ENCODE measurements at regions of chr14 and their contacts with region 1.

Region 1: GRCh38 chr14:103808403-103809001 is 38.9 kb downstream of the PPP1R13B start:
- DNase-seq: peak; percentile 88
- H3K4me3 Mint-ChIP-seq: no peak overlapping the region
- H3K27ac Mint-ChIP-seq: no peak overlapping the region
- H3K4me1 Mint-ChIP-seq: peaks cover 14% of the 10 kb centered on the region
- H3K27me3 Mint-ChIP-seq: no peaks in the 10 kb centered on the region
- CTCF ChIP-seq: peak; percentile 83

Region 2: GRCh38 chr14:103657471-103657870 is 151.0 kb before region 1 on chr14:
- CTCF ChIA-PET with region 1: no interaction called
- POLR2A ChIA-PET with region 1: no interaction called
- intact Hi-C with region 1: no loop called
- DNase-seq: no peak
- H3K4me3 Mint-ChIP-seq: no peak overlapping the region
- H3K27ac Mint-ChIP-seq: no peak overlapping the region
- H3K4me1 Mint-ChIP-seq: no peaks in the 10 kb centered on the region
- H3K27me3 Mint-ChIP-seq: no peaks in the 10 kb centered on the region
- CTCF ChIP-seq: no peak

Region 3: GRCh38 chr14:103788086-103788485 is 20.4 kb before region 1 on chr14:
- CTCF ChIA-PET with region 1: interaction called, 10 read pairs
- POLR2A ChIA-PET with region 1: interaction called, 8 read pairs
- intact Hi-C with region 1: no loop called
- DNase-seq: no peak
- H3K4me3 Mint-ChIP-seq: no peak overlapping the region
- H3K27ac Mint-ChIP-seq: no peak overlapping the region
- H3K4me1 Mint-ChIP-seq: peaks cover 5% of the 10 kb centered on the region
- H3K27me3 Mint-ChIP-seq: no peaks in the 10 kb centered on the region
- CTCF ChIP-seq: no peak

Region 4: DNA sequence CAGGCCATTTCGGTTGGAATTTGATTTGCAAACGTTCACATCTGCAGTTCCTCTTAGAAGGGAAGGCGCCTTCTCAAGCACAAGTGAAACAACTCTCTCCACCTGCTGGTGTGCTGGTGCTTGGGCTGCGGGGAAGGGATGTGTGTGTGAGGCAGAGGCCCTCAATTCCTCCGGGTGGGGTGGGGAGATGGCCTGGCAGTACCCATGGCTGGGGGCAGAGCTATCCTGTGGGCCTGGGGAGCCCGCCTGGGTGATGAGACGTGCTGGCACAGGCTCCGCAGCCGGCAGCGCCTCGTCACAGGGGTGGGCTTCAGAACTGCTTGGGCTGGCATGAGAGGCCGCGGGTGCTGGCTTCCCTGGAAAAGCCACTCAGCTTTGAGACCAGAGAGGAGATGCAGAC is 90.8 kb after region 1 on chr14:
- CTCF ChIA-PET with region 1: interaction called, 22 read pairs
- POLR2A ChIA-PET with region 1: no interaction called
- intact Hi-C with region 1: no loop called
- DNase-seq: no peak
- H3K4me3 Mint-ChIP-seq: no peak overlapping the region
- H3K27ac Mint-ChIP-seq: no peak overlapping the region
- H3K4me1 Mint-ChIP-seq: peaks cover 9% of the 10 kb centered on the region
- H3K27me3 Mint-ChIP-seq: no peaks in the 10 kb centered on the region
- CTCF ChIP-seq: no peak

Region 5: DNA sequence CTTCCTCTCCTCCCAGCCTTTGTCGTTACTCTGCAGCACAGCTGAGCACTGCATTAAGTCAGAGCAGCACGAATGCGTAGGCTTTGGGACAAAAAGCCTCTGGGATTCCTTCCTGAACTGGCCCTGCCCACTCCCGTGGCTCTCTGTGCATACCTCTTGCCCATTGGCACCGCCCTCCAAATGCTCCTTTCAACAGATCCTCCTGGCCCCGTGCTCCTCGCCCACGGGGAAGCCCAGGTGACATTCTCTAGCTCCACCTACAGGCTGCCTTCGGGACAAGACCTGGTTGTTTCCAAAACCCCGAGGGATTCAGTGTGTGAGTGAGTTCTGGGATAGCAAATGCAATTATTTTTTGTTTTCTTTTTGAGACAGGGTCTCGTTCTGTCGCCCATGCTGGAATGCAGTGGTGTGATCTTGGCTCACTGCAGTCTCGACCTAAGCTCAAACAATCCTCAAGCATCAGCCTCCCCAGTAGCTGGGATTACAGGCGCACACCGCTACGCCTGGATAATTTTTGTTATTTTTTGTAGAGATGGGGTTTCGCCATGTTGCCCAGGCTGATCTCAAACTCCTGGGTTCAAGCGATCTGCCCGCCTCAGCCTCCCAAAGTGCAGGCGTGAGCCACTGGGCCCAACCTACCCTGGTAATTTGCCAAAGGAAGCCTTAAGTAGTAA is 101.9 kb after region 1 on chr14:
- CTCF ChIA-PET with region 1: interaction called, 121 read pairs
- POLR2A ChIA-PET with region 1: interaction called, 22 read pairs
- intact Hi-C with region 1: loop called (anchors 1 kb)
- DNase-seq: peak; percentile 96
- H3K4me3 Mint-ChIP-seq: peak overlapping the region; percentile 32
- H3K27ac Mint-ChIP-seq: no peak overlapping the region
- H3K4me1 Mint-ChIP-seq: peaks cover 7% of the 10 kb centered on the region
- H3K27me3 Mint-ChIP-seq: no peaks in the 10 kb centered on the region
- CTCF ChIP-seq: peak; percentile 88

Region 6: GRCh38 chr14:104078031-104078455 is 269.5 kb after region 1 on chr14:
- CTCF ChIA-PET with region 1: interaction called, 22 read pairs
- POLR2A ChIA-PET with region 1: no interaction called
- intact Hi-C with region 1: loop called (anchors 1 kb)
- DNase-seq: peak; percentile 86
- H3K4me3 Mint-ChIP-seq: no peak overlapping the region
- H3K27ac Mint-ChIP-seq: no peak overlapping the region
- H3K4me1 Mint-ChIP-seq: no peaks in the 10 kb centered on the region
- H3K27me3 Mint-ChIP-seq: no peaks in the 10 kb centered on the region
- CTCF ChIP-seq: peak; percentile 100